Heart left ventricle (tissue), 16 donors: ENCODE measurements at regions of chr9 and their contacts with region 1.

Region 1: GRCh38 chr9:36470643-36471290 is 70.7 kb upstream of the RNF38 start:
- DNase-seq: peak; percentile 61 to 73 (median 66)
- ATAC-seq: peak; percentile 82 to 96 (median 92)
- H3K4me3 ChIP-seq: peak overlapping the region in 10 of 12 donors; percentile 21 to 57 (median 47)
- H3K27ac ChIP-seq: peak overlapping the region; percentile 25 to 95 (median 72)
- H3K4me1 ChIP-seq: peaks cover 0 to 35% (median 19%) of the 10 kb centered on the region in 12 donors
- H3K27me3 ChIP-seq: no peaks in the 10 kb centered on the region
- CTCF ChIP-seq: no peak
- POLR2A ChIP-seq: no peak

Region 2: DNA sequence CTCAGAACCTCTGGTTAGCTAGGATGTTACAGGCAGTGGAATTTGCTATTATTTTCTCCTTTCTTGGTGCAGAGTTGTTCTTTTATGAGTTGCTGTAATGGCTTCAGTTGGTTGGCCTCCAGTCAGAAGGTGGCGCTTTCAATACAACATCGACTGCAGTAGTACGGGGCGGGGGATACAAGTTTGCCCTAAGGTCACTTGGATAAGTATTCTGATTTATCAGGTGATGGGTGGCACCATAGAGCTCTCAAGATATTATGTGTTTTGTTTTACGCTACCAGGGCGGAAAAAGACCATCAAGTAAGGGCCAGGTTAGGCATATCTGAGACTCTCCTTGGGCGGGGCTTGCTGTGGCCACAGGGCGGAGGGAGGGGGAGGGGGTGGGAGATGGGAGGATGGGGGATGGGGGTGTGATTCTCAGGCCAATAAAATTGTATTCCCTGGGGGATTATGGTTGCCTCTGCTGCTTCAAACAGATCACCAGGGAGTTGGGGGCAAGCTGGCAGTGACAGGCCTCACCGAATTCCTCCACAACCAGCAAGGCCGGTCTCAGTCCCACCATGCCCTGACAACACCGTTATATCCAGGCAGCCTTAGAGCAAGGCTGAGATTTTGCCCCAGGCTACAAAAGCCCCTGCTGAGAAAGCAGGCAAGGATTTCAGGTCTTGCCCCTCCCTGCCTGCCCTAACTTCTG is 54.8 kb before region 1 on chr9:
- intact Hi-C with region 1: loop called in 1 of 10 experiments (anchors 5 kb)
- DNase-seq: no peak
- ATAC-seq: no peak
- H3K4me3 ChIP-seq: no peak overlapping the region
- H3K27ac ChIP-seq: no peak overlapping the region
- H3K4me1 ChIP-seq: peaks cover 0 to 9% (median 0%) of the 10 kb centered on the region in 12 donors
- H3K27me3 ChIP-seq: no peaks in the 10 kb centered on the region
- CTCF ChIP-seq: no peak
- POLR2A ChIP-seq: no peak

Region 3: DNA sequence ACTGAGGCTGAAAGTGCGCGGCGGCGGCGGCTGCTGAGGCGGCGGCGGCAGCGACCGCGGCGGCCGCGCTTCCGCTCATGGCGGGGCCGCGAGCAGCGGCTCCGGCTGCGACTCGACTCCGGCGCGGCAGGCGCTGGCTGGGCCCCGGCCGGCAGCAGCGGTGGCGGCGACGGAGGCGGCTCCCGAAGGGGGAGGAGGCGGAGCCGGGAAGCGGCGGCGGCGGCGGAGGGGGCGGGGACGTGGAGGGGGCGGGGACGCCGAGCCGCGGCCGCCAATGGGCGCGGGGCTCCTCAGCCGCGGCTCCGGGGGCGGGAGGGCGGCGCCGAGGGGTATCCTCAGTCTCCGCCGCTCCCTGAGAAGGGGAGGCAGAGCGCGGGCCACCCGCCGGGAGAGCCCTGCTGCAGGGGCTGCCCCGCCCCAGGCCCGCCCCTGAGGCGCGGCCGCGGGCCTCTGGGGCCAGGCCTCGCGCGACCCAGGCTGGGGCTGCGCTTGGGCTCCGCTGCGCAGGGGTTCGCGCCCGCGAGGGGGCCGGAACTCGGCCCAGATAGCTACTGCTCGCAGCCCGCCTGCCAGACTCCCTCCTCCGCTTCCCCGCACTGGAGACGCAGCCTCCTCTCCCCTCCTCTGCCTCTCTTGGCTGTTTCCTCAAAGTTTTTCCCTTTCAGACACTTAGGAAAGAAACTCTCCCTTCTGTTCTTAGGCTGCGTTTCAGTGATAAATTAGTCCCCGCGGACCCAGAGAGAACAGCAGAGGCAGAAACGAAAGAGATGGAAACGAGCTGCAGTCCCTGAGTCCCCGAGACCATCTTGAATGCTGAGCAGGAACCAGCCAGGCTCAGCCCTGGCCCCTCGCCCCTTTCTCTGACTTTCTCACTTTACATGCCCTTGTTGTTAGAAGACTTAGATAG is 17.0 kb after region 1 on chr9:
- intact Hi-C with region 1: loop called in 1 of 10 experiments (anchors 1 kb)
- DNase-seq: peak; percentile 93 to 96 (median 94)
- ATAC-seq: peak; percentile 96 to 99 (median 98)
- H3K4me3 ChIP-seq: peak overlapping the region; percentile 15 to 99 (median 86)
- H3K27ac ChIP-seq: peak overlapping the region; percentile 86 to 97 (median 92)
- H3K4me1 ChIP-seq: peaks cover 3 to 34% (median 19%) of the 10 kb centered on the region in 12 donors
- H3K27me3 ChIP-seq: no peaks in the 10 kb centered on the region
- CTCF ChIP-seq: peak in 4 of 12 donors; percentile 3 to 33 (median 12)
- POLR2A ChIP-seq: peak in 1 of 2 donors; percentile 88

Region 4: DNA sequence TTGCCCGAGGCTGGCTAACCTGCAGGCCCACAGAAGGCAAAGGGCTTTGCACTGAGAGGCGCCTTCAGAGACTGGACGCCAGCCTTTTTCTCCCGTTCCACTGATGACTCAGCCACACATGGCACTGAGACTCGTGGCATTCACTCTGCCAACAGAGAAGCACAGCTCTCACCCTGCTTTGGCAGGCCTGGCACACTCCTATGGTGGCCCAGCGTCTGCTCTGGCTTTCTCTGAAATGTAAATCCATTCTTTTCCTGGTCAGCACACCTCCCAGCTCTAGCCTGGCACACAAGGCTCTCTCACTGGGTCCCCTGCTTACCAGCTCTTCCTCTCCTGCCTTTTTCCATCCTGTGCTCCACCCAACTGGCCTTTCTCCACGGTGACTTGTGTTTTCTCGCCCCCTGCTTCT is 96.0 kb after region 1 on chr9:
- intact Hi-C with region 1: no loop called
- DNase-seq: peak in 3 of 5 donors; percentile 29 to 51 (median 34)
- ATAC-seq: peak; percentile 64 to 88 (median 86)
- H3K4me3 ChIP-seq: no peak overlapping the region
- H3K27ac ChIP-seq: peak overlapping the region in 6 of 12 donors; percentile 4 to 67 (median 46)
- H3K4me1 ChIP-seq: peaks cover 0 to 6% (median 0%) of the 10 kb centered on the region in 12 donors
- H3K27me3 ChIP-seq: no peaks in the 10 kb centered on the region
- CTCF ChIP-seq: no peak
- POLR2A ChIP-seq: no peak